Right ventricle myocardium superior (tissue), 1 donor: ENCODE measurements at regions of chr4 and their contacts with region 1.

Region 1: GRCh38 chr4:73653695-73654106 is 33.5 kb upstream of the RASSF6 start:
- DNase-seq: no peak
- ATAC-seq: peak; percentile 56

Region 2: GRCh38 chr4:73311428-73311827 is 342.3 kb before region 1 on chr4:
- intact Hi-C with region 1: loop called (anchors 10 kb)
- DNase-seq: no peak
- ATAC-seq: no peak

Region 3: GRCh38 chr4:73593631-73594241 is 60.0 kb before region 1 on chr4:
- intact Hi-C with region 1: no loop called
- DNase-seq: no peak
- ATAC-seq: no peak

Region 4: DNA sequence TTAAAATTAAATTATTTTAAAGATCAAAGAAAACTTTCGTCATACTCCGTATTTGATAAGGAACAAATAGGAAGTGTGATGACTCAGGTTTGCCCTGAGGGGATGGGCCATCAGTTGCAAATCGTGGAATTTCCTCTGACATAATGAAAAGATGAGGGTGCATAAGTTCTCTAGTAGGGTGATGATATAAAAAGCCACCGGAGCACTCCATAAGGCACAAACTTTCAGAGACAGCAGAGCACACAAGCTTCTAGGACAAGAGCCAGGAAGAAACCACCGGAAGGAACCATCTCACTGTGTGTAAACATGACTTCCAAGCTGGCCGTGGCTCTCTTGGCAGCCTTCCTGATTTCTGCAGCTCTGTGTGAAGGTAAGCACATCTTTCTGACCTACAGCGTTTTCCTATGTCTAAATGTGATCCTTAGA is 86.7 kb after region 1 on chr4 and contains the start of gene CXCL8:
- intact Hi-C with region 1: no loop called
- DNase-seq: peak; percentile 76
- ATAC-seq: peak; percentile 79
- total RNA-seq, gene CXCL8: not detected

Region 5: DNA sequence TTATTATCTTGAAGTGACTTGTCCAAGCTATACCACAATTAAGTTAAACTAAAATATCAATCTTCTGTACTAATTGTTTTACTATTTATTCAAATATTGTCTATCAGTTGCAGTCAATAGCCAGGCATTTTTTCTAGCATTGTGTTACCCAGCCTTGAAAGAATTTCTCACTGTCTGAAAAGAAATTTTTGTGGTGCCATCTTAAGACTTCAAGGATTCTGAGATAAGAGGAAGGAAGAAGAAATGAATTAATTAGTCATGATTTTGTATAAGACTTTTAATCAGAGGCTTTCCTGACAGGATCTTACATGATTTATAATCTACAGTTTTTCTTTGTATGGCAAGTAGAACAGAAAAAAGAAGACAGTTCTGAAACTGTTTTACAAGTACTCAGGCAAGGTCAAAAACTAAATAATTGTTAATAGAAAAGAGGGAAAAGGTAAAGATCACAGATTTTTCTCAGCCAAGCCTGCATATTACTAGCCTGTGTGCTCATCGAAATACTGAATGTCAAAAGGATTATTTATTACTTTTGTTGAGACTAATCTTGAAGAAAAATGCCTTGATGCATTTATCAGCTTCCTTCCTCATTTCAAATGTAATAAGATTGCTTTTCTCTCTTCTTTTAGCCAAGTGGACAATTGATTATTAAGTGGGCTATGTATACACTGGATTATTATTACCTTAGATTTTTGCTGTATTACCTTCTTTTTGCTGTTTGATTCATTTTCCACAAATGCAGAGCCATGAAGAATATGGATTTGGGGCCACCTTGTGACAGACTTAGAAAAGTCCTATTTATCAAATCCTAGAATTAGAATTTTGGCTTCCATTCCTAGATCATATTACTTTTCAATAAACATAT is 269.3 kb after region 1 on chr4:
- intact Hi-C with region 1: loop called (anchors 10 kb)
- DNase-seq: no peak
- ATAC-seq: no peak

Region 6: GRCh38 chr4:74133786-74134499 is 480.2 kb after region 1 on chr4:
- intact Hi-C with region 1: no loop called
- DNase-seq: peak; percentile 73
- ATAC-seq: peak; percentile 86